ENCODE measurements at regions of chr1 and their contacts with region 1.

Region 1: GRCh38 chr1:152189657-152190442 is 30.8 kb upstream of the RPTN start:
- DNase-seq: peak; percentile 83
- H3K4me3 ChIP-seq: peak overlapping the region; percentile 76
- H3K27ac ChIP-seq: peak overlapping the region; percentile 42; the same call in 1 of the 2 replicates
- H3K4me1 ChIP-seq: peaks cover 15% of the 10 kb centered on the region
- H3K27me3 ChIP-seq: no peaks in the 10 kb centered on the region

Region 2: DNA sequence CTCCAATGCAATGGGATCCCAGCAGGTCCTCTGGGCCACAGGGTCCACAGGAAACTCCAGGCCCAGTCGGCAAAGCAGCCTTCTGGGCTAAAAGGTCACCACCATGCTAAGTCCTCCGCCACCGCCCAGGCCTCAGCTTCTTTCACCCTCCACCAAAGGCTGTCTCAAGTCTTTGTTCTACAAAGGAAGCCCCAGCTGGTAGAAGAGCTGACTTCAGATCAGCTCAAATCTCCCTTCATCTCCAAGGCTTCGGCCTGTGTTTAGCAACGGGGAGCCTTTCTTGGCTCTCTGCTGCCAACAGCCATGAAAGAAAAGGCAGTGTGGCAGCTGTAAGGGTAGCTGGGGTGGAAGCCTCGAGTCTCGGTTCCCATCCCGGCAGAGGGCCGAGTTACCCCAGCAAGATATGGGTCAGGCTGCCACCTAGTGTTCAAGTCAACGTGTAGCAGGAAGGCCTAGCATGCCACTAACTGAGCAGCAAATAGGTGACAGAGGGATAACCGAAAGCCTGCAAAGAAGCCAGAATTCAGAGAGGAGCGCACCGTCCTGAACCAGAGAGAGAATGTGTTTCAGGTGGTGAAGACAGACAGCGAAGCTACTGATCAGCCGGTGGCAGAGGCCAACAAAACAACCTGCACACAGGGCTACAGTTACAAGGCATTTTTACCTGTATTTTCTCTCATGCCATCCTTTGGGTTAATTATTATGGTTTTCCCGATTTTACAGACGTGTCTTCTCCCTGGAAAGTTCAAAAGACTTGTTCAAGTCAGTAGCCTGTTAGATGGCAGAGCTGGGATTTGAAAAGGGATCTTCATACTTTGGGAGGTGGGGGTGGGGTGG is 251.0 kb after region 1 on chr1:
- in situ Hi-C with region 1: loop called (anchors 5 kb)
- DNase-seq: peak; percentile 89
- H3K4me3 ChIP-seq: no peak overlapping the region
- H3K27ac ChIP-seq: no peak overlapping the region
- H3K4me1 ChIP-seq: peaks cover 22% of the 10 kb centered on the region
- H3K27me3 ChIP-seq: no peaks in the 10 kb centered on the region

Region 3: GRCh38 chr1:152497273-152497672 is 307.4 kb after region 1 on chr1:
- in situ Hi-C with region 1: no loop called
- DNase-seq: peak; percentile 72
- H3K4me3 ChIP-seq: no peak overlapping the region
- H3K27ac ChIP-seq: no peak overlapping the region
- H3K4me1 ChIP-seq: peaks cover 13% of the 10 kb centered on the region
- H3K27me3 ChIP-seq: no peaks in the 10 kb centered on the region; the same call in 1 of the 2 replicates